CD4-positive, alpha-beta memory T cell (primary cell): ENCODE measurements at regions of chr5 and their contacts with region 1.

Region 1: DNA sequence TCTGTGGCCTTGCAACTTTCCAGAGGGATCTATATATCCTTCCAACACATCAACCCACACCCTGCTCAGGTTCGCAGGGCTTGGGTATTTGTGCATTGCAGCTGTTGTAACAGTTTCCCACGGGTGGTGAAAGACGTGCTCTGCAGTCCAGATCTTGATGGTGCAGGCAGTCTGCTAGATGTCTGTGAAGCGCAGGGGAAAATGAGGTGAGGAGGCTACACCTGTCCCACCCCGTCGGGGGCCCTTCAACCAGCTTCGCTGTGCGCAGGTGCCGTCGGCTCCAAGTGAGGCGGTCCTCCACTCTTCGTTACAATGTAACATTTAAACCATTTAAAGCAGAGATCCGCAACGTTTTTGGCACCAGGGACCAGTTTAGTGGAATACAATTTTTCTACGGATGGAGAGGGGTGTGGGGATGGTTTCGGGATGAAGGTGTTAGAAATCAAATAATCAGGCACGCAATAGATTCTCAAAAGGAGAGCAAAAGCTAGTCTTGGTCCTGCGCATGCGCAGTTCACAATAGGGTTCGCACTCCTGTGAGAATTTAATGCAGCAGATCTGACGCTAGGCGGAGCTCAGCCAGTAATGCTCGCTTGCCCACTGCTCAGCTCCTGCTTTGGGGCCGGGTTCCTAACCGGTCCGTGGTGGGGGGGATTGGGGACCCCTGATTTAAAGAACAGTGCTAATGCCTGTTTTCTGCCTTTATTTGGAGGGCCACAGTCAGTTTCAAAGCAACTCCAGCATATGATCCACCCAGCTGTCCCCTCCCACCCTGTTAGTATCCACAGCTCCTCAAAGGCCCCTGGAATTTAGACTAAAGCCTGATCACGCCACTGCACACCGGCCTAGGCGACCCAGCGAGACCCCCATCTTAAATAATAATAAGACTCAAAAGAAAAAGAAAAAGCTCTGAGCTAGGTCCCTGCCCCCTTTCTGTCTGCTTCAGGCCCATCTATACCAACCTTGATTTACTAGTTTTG is 97.1 kb upstream of the SELENOP start:
- DNase-seq: peak; percentile 89 to 90 (median 89)
- H3K4me3 ChIP-seq: peak overlapping the region; percentile 40 to 56
- H3K4me3 Mint-ChIP-seq: peak overlapping the region; percentile 88 to 97 (median 93)
- H3K27ac ChIP-seq: peak overlapping the region; percentile 44
- H3K27ac Mint-ChIP-seq: peak overlapping the region; percentile 66 to 97 (median 95)
- H3K4me1 ChIP-seq: peaks cover 7% of the 10 kb centered on the region
- H3K4me1 Mint-ChIP-seq: peaks cover 8 to 18% (median 12%) of the 10 kb centered on the region in 4 donors
- H3K27me3 ChIP-seq: no peaks in the 10 kb centered on the region
- H3K27me3 Mint-ChIP-seq: peaks cover 10% of the 10 kb centered on the region in 2 donors

Region 2: DNA sequence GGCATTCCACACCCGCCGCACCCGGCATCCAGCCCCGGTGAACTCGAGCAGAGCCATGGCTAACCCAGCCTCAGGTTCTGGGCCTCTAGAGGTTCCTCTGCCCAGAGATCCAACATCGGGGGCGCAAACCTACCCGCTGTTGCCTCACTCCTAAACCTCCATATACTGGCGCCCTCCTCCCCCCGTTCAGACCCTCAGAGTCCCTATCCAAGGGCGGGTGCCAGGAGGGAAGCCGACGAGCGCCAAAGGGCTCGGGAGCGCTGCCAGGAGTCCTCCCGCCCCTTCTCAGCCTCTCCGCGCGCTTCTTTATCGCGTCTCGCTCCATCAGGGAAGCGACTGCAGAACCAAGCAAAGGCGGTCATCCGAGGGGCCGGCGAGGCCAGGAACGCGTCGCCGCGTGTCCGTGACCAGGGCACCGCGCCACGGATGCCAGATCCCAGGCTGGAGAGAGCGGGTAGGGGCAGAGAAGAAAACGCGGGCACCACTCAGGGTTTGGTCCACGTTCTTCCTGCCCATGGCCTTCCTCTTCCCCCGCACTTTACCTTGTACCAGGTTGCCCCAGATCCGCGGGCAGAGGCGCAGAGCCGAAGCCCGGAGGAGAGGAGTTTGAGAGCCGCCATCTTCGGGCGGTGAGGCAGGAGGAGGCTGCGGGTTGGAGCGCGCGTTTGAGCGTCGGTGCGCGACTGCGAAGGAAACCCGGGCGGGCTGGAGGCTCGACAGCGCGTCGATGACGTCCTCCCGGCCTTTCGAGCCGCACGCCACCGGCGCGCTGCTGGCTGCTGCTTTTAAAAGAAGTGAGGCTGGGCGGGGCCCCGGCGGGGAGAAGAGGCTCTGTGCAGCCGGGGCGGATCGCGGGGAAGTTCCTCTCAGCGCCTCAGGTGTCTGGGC is 1038.8 kb before region 1 on chr5 and contains the start of gene OXCT1:
- CTCF ChIA-PET with region 1: no interaction called
- POLR2A ChIA-PET with region 1: no interaction called
- intact Hi-C with region 1: loop called (anchors 5 kb)
- DNase-seq: peak; percentile 91 to 96 (median 96)
- H3K4me3 ChIP-seq: peak within 1 kb of the TSS; percentile 74 to 81
- H3K4me3 Mint-ChIP-seq: peak within 1 kb of the TSS; percentile 85 to 96 (median 91)
- H3K27ac ChIP-seq: peak within 1 kb of the TSS; percentile 93
- H3K27ac Mint-ChIP-seq: peak within 1 kb of the TSS; percentile 94 to 99 (median 97)
- H3K4me1 ChIP-seq: peaks cover 55% of the 10 kb centered on the region
- H3K4me1 Mint-ChIP-seq: peaks cover 37 to 70% (median 46%) of the 10 kb centered on the region in 4 donors
- H3K27me3 ChIP-seq: no peaks in the 10 kb centered on the region
- H3K27me3 Mint-ChIP-seq: no peaks in the 10 kb centered on the region
- total RNA-seq, gene OXCT1: 34.1 to 37.5 TPM

Region 3: DNA sequence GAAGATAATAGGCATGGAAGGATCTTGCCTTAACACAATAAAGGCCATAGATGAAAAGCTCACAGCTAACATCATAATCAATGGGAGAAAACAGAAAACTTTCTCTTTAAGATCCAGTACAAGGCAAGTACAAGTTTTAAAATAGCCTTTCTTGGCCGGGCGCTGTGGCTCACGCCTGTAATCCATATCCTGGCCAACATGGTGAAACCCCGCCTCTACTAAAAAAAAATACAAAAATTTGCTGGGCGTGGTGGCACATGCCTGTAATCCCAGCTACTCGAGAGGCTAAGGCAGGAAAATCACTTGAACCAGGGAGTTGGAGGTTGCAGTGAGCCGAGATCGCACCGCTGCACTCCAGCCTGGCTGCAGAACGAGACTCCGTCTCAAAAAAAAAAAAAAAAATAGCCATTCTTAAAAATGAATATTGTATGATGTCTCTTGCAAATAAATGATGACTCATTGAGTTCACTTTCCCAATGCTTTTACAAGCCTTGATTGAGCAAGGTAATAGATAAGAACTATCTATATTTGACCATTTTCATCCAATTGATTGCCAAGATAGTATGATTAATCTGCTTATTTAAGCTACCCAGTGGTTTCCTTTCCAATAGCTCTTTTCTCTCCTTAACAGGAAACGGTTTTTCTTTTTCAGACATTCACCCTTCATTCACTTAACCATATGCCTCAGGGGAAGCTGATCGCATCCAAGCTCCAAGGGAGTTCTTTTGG is 136.4 kb before region 1 on chr5:
- CTCF ChIA-PET with region 1: no interaction called
- POLR2A ChIA-PET with region 1: no interaction called
- intact Hi-C with region 1: no loop called
- DNase-seq: no peak
- H3K4me3 ChIP-seq: no peak overlapping the region
- H3K4me3 Mint-ChIP-seq: no peak overlapping the region
- H3K27ac ChIP-seq: no peak overlapping the region
- H3K27ac Mint-ChIP-seq: no peak overlapping the region
- H3K4me1 ChIP-seq: no peaks in the 10 kb centered on the region
- H3K4me1 Mint-ChIP-seq: no peaks in the 10 kb centered on the region
- H3K27me3 ChIP-seq: no peaks in the 10 kb centered on the region
- H3K27me3 Mint-ChIP-seq: peaks cover 7 to 8% of the 10 kb centered on the region in 2 donors

Region 4: GRCh38 chr5:42950440-42951292 is 41.9 kb after region 1 on chr5:
- CTCF ChIA-PET with region 1: interaction called, 134 read pairs
- POLR2A ChIA-PET with region 1: interaction called, 106 read pairs
- intact Hi-C with region 1: loop called (anchors 1 kb)
- DNase-seq: peak; percentile 61 to 90 (median 66)
- H3K4me3 ChIP-seq: peak overlapping the region; percentile 83 to 90
- H3K4me3 Mint-ChIP-seq: peak overlapping the region; percentile 93 to 99 (median 98)
- H3K27ac ChIP-seq: peak overlapping the region; percentile 96
- H3K27ac Mint-ChIP-seq: peak overlapping the region; percentile 99 to 100 (median 100)
- H3K4me1 ChIP-seq: peaks cover 22% of the 10 kb centered on the region
- H3K4me1 Mint-ChIP-seq: peaks cover 7 to 42% (median 30%) of the 10 kb centered on the region in 4 donors
- H3K27me3 ChIP-seq: no peaks in the 10 kb centered on the region
- H3K27me3 Mint-ChIP-seq: no peaks in the 10 kb centered on the region

Region 5: DNA sequence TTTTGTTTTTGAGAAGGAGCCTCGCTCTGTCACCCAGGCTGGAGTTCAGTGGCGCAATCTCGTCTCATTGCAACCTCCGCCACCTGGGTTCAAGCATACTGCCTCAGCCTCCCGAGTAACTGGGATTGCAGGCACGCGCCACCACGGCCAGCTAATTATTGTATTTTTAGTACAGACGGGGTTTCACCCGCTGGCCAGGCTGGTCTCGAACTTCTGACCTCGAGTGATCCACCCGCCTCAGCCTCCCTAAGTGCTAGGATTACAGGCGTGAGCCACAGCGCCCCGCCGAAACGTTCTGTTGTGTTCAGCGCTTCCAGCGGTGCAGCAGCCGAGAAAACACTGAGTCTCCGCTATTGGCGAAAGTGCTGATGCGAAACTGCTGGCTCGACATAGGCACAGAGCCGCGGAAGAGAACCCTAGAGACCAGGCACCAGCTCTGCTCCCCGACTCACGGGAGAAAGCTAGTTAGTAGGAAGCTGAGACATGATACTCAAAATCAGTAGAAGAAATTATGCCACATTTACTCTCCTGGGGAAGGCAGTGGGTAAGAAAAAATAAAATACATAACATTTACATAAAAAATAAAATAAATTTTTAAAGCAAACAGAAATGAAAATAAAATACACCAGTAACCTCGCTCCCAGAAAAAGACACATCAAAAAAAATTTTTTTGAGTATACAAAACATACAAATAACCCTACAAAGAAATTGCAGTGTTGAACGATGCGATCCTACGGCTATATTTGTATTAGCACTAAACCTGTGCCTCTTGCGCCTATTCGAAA is 99.8 kb after region 1 on chr5:
- CTCF ChIA-PET with region 1: interaction called, 18 read pairs
- POLR2A ChIA-PET with region 1: interaction called, 48 read pairs
- intact Hi-C with region 1: loop called (anchors 1 kb)
- DNase-seq: peak; percentile 89 to 92 (median 90)
- H3K4me3 ChIP-seq: peak overlapping the region; percentile 66 to 84
- H3K4me3 Mint-ChIP-seq: peak overlapping the region; percentile 84 to 94 (median 91)
- H3K27ac ChIP-seq: peak overlapping the region; percentile 85
- H3K27ac Mint-ChIP-seq: peak overlapping the region; percentile 90 to 99 (median 97)
- H3K4me1 ChIP-seq: peaks cover 38% of the 10 kb centered on the region
- H3K4me1 Mint-ChIP-seq: peaks cover 19 to 48% (median 33%) of the 10 kb centered on the region in 4 donors
- H3K27me3 ChIP-seq: no peaks in the 10 kb centered on the region
- H3K27me3 Mint-ChIP-seq: no peaks in the 10 kb centered on the region

Region 6: DNA sequence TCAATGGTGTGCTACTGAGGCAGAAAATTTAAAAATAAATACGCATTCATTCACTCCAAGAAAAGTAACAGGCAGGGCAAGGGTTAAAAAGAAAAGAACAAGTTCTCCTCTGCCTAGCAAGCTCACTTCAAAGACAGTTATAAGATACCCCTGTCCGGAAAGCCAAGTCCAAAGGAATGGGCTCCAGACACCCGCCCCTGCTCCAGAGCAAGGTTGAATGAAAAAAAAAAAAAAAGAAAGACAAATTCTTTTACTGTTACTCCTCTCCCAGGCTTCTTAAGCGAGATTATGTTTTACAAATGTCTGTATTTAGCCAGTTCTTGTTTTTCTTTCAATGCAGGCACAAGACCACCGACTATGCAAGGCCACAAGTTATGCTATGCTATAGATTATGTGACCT is 140.4 kb after region 1 on chr5:
- CTCF ChIA-PET with region 1: interaction called, 11 read pairs
- POLR2A ChIA-PET with region 1: interaction called, 177 read pairs
- intact Hi-C with region 1: no loop called
- DNase-seq: no peak
- H3K4me3 ChIP-seq: no peak overlapping the region
- H3K4me3 Mint-ChIP-seq: no peak overlapping the region
- H3K27ac ChIP-seq: no peak overlapping the region
- H3K27ac Mint-ChIP-seq: no peak overlapping the region
- H3K4me1 ChIP-seq: peaks cover 13% of the 10 kb centered on the region
- H3K4me1 Mint-ChIP-seq: peaks cover 15 to 19% (median 17%) of the 10 kb centered on the region in 4 donors
- H3K27me3 ChIP-seq: no peaks in the 10 kb centered on the region
- H3K27me3 Mint-ChIP-seq: no peaks in the 10 kb centered on the region

Region 7: DNA sequence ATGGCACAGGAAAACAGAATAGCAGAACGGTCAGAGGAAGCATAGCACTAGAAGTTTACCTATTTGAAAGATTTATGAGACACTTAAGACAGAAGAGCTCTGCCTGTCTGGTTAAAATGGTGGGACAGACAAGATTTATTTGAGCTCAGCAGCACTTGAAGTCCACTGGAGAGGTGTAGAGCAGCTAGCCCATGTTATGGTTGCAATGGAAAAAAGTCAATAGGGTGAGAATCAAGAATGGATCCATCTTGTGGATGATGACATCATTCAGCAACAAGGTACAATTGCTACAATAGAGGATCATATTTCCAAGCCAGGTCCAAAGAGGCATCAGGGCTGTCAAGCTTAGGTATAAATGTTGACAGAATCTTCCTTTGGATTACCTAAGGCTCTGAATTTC is 190.8 kb after region 1 on chr5:
- CTCF ChIA-PET with region 1: interaction called, 124 read pairs
- POLR2A ChIA-PET with region 1: interaction called, 3 read pairs
- intact Hi-C with region 1: loop called (anchors 2 kb)
- DNase-seq: no peak
- H3K4me3 ChIP-seq: no peak overlapping the region
- H3K4me3 Mint-ChIP-seq: no peak overlapping the region
- H3K27ac ChIP-seq: no peak overlapping the region
- H3K27ac Mint-ChIP-seq: no peak overlapping the region
- H3K4me1 ChIP-seq: peaks cover 19% of the 10 kb centered on the region
- H3K4me1 Mint-ChIP-seq: peaks cover 15 to 26% (median 23%) of the 10 kb centered on the region in 4 donors
- H3K27me3 ChIP-seq: no peaks in the 10 kb centered on the region
- H3K27me3 Mint-ChIP-seq: no peaks in the 10 kb centered on the region

Region 8: DNA sequence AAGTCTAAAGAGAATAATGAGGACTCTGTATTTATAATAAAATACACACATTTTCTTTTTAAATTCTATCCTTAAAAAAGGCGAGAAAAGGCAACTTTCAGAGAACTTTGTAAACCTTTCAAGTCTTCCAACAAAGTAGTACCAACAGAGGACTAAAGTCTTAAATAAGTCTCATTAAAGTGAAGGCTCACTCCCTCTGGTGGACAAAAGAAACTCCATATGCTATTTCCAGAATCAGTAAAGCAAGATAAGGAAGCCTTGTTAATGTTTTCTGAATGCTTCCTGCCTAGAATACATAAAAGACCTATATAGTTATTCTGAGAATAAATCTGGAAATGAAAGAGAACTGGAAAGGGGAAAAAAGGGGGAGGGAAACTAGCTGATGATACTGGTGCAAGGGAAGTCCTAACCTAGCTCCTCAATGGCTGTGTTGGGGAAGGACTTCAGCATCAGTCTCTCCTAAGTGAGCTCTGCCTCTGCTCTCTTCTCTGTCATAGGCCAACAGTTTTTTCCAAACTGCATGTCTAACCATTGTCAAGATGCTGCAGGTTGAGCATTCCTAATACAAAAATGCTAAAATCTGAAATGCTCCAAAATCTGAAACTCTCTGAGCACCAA is 397.3 kb after region 1 on chr5:
- CTCF ChIA-PET with region 1: interaction called, 14 read pairs
- POLR2A ChIA-PET with region 1: no interaction called
- intact Hi-C with region 1: loop called (anchors 1 kb)
- DNase-seq: peak; percentile 37 to 52 (median 46)
- H3K4me3 ChIP-seq: no peak overlapping the region
- H3K4me3 Mint-ChIP-seq: no peak overlapping the region
- H3K27ac ChIP-seq: no peak overlapping the region
- H3K27ac Mint-ChIP-seq: peak overlapping the region in 4 of 7 donors; percentile 15 to 78 (median 46)
- H3K4me1 ChIP-seq: peaks cover 7% of the 10 kb centered on the region
- H3K4me1 Mint-ChIP-seq: peaks cover 21 to 48% (median 33%) of the 10 kb centered on the region in 4 donors
- H3K27me3 ChIP-seq: no peaks in the 10 kb centered on the region
- H3K27me3 Mint-ChIP-seq: no peaks in the 10 kb centered on the region